Panc1 (cell line): ENCODE measurements at regions of chr15 and their contacts with region 1.

Region 1: GRCh38 chr15:29668120-29668602 is 154.1 kb downstream of the TJP1 start:
- DNase-seq: no peak
- ATAC-seq: peak; percentile 90
- H3K4me3 ChIP-seq: no peak overlapping the region
- H3K27ac ChIP-seq: no peak overlapping the region
- H3K4me1 ChIP-seq: peaks cover 13% of the 10 kb centered on the region
- H3K27me3 ChIP-seq: no peaks in the 10 kb centered on the region
- CTCF ChIP-seq: peak; percentile 95

Region 2: GRCh38 chr15:29613951-29614382 is 54.2 kb before region 1 on chr15:
- CTCF ChIA-PET with region 1: no interaction called
- POLR2A ChIA-PET with region 1: no interaction called
- in situ Hi-C with region 1: no loop called
- intact Hi-C with region 1: loop called (anchors 5 kb)
- DNase-seq: no peak
- ATAC-seq: peak; percentile 96
- H3K4me3 ChIP-seq: no peak overlapping the region
- H3K27ac ChIP-seq: no peak overlapping the region
- H3K4me1 ChIP-seq: no peaks in the 10 kb centered on the region
- H3K27me3 ChIP-seq: peaks cover 5% of the 10 kb centered on the region; the same call in 1 of the 2 replicates
- CTCF ChIP-seq: peak; percentile 89

Region 3: GRCh38 chr15:29711531-29711930 is 43.4 kb after region 1 on chr15:
- CTCF ChIA-PET with region 1: no interaction called
- POLR2A ChIA-PET with region 1: no interaction called
- in situ Hi-C with region 1: no loop called
- intact Hi-C with region 1: loop called (anchors 10 kb)
- DNase-seq: no peak
- ATAC-seq: no peak
- H3K4me3 ChIP-seq: no peak overlapping the region
- H3K27ac ChIP-seq: no peak overlapping the region
- H3K4me1 ChIP-seq: no peaks in the 10 kb centered on the region
- H3K27me3 ChIP-seq: no peaks in the 10 kb centered on the region
- CTCF ChIP-seq: no peak

Region 4: GRCh38 chr15:29925227-29926082 is 257.3 kb after region 1 on chr15:
- CTCF ChIA-PET with region 1: no interaction called
- POLR2A ChIA-PET with region 1: no interaction called
- in situ Hi-C with region 1: no loop called
- intact Hi-C with region 1: loop called (anchors 10 kb)
- DNase-seq: no peak
- ATAC-seq: peak; percentile 92
- H3K4me3 ChIP-seq: no peak overlapping the region
- H3K27ac ChIP-seq: no peak overlapping the region
- H3K4me1 ChIP-seq: peaks cover 8% of the 10 kb centered on the region; the same call in 1 of the 2 replicates
- H3K27me3 ChIP-seq: no peaks in the 10 kb centered on the region
- CTCF ChIP-seq: peak; percentile 92

Region 5: GRCh38 chr15:30073915-30074314 is 405.8 kb after region 1 on chr15:
- CTCF ChIA-PET with region 1: no interaction called
- POLR2A ChIA-PET with region 1: no interaction called
- in situ Hi-C with region 1: no loop called
- intact Hi-C with region 1: loop called (anchors 10 kb)
- DNase-seq: no peak
- ATAC-seq: no peak
- H3K4me3 ChIP-seq: no peak overlapping the region
- H3K27ac ChIP-seq: no peak overlapping the region
- H3K4me1 ChIP-seq: no peaks in the 10 kb centered on the region
- H3K27me3 ChIP-seq: peaks cover 7% of the 10 kb centered on the region
- CTCF ChIP-seq: no peak